ENCODE measurements at regions of chr1 and their contacts with region 1.

Region 1: GRCh38 chr1:179441501-179441900 is 75.7 kb downstream of the AXDND1 start:
- DNase-seq: peak; percentile 31 to 43
- H3K4me3 ChIP-seq: no peak overlapping the region
- H3K4me3 Mint-ChIP-seq: no peak overlapping the region
- H3K27ac Mint-ChIP-seq: no peak overlapping the region
- H3K4me1 ChIP-seq: no peaks in the 10 kb centered on the region
- H3K4me1 Mint-ChIP-seq: peaks cover 5% of the 10 kb centered on the region
- H3K27me3 ChIP-seq: no peaks in the 10 kb centered on the region
- H3K27me3 Mint-ChIP-seq: peaks cover 3% of the 10 kb centered on the region
- CTCF ChIP-seq: no peak

Region 2: GRCh38 chr1:179327679-179328078 is 113.8 kb before region 1 on chr1:
- CTCF ChIA-PET with region 1: no interaction called
- POLR2A ChIA-PET with region 1: no interaction called
- intact Hi-C with region 1: no loop called
- DNase-seq: no peak
- H3K4me3 ChIP-seq: no peak overlapping the region
- H3K4me3 Mint-ChIP-seq: no peak overlapping the region
- H3K27ac Mint-ChIP-seq: no peak overlapping the region
- H3K4me1 ChIP-seq: peaks cover 14% of the 10 kb centered on the region
- H3K4me1 Mint-ChIP-seq: peaks cover 19% of the 10 kb centered on the region
- H3K27me3 ChIP-seq: no peaks in the 10 kb centered on the region
- H3K27me3 Mint-ChIP-seq: no peaks in the 10 kb centered on the region
- CTCF ChIP-seq: no peak

Region 3: DNA sequence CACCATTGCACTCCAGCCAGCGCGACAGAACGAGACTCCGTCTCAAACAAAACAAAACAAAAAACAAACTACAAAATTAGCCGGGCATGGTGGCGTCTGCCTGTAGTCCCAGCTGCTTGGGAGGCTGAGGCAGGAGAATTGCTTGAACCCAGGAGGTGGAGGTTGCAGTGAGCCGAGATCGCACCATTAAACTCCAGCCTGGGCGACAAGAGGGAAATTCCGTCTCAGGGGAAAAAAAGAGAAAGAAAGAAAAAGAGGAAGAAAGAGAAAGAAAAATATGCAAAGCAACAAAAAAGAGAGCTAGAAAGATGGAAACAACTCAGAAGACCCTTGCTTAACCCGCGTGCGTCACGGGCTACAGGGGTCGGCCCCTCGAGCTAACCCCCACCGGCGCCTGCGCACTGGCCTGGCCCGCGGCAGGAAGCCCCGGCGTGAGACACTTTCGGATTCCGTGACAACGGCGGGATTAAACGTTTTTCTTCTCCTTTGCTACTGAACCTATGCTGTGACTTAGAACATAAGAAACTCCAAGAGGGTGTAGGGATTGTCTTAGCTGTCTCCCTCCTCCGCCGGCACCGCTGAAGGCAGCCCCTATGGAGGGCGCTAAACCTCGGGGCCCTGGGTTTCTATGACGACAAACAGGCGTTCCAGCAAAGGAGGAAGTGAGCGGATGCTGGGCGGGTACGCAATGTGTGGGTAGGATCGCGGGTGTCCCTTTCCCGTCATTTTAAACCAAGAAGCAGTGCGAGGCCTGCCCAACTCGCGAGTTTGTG is 76.0 kb before region 1 on chr1 and contains the start of gene AXDND1:
- CTCF ChIA-PET with region 1: no interaction called
- POLR2A ChIA-PET with region 1: no interaction called
- intact Hi-C with region 1: loop called (anchors 2 kb)
- DNase-seq: peak; percentile 86 to 87
- H3K4me3 ChIP-seq: peak within 1 kb of the TSS; percentile 70
- H3K4me3 Mint-ChIP-seq: peak within 1 kb of the TSS; percentile 98
- H3K27ac Mint-ChIP-seq: peak within 1 kb of the TSS; percentile 99
- H3K4me1 ChIP-seq: peaks cover 15% of the 10 kb centered on the region
- H3K4me1 Mint-ChIP-seq: no peaks in the 10 kb centered on the region
- H3K27me3 ChIP-seq: no peaks in the 10 kb centered on the region
- H3K27me3 Mint-ChIP-seq: no peaks in the 10 kb centered on the region
- CTCF ChIP-seq: peak; percentile 14 to 54
- total RNA-seq, gene AXDND1: not detected in 2 replicates

Region 4: DNA sequence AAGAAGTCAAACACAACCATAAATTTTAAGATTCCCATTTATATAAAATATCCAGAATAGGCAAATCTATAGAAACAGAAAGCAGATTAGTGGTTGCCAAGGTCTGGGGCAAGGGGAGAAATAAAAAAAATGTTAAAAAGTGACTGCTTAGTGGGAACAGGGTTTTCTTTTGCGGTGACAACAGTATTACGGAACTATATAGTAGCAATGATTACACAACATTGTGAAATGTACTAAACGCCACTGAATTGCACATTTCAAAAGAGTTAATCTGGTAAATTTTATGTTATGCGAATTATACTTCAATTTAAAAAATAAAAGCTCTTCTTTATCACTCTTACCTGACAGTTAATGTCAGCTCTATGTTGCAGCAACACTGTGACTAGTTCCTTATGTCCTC is 955.7 kb after region 1 on chr1:
- CTCF ChIA-PET with region 1: no interaction called
- POLR2A ChIA-PET with region 1: no interaction called
- intact Hi-C with region 1: no loop called
- DNase-seq: no peak
- H3K4me3 ChIP-seq: no peak overlapping the region
- H3K4me3 Mint-ChIP-seq: no peak overlapping the region
- H3K27ac Mint-ChIP-seq: no peak overlapping the region
- H3K4me1 ChIP-seq: no peaks in the 10 kb centered on the region
- H3K4me1 Mint-ChIP-seq: no peaks in the 10 kb centered on the region
- H3K27me3 ChIP-seq: no peaks in the 10 kb centered on the region
- H3K27me3 Mint-ChIP-seq: no peaks in the 10 kb centered on the region
- CTCF ChIP-seq: no peak

Measured in Caco-2 (cell line).